ENCODE measurements at regions of chr11 and their contacts with region 1.

Region 1: DNA sequence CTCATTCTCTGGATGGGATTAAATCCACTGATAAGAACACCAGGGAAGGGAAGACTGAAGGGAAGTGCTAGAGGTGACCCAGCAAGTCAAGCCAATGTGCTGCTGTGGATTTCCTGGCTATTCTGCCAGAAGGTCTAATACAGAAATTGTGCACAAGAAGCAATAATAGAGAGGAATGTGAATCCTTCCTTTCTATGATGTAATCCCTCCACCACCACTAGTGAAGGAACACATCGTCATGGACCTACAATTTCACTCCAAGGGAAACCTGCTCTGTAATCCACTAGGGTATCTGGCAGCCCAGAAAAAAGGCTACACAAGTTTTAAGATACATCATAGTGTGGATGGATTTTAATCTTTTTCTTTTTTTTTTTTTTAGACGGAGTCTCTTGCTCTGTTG is 17.4 kb downstream of the LARGE2 start:
- DNase-seq: no peak
- ATAC-seq: no peak
- H3K4me3 Mint-ChIP-seq: no peak overlapping the region
- H3K27ac Mint-ChIP-seq: peak overlapping the region; percentile 88
- H3K4me1 Mint-ChIP-seq: peaks cover 60% of the 10 kb centered on the region
- H3K27me3 Mint-ChIP-seq: no peaks in the 10 kb centered on the region
- CTCF ChIP-seq: no peak

Region 2: DNA sequence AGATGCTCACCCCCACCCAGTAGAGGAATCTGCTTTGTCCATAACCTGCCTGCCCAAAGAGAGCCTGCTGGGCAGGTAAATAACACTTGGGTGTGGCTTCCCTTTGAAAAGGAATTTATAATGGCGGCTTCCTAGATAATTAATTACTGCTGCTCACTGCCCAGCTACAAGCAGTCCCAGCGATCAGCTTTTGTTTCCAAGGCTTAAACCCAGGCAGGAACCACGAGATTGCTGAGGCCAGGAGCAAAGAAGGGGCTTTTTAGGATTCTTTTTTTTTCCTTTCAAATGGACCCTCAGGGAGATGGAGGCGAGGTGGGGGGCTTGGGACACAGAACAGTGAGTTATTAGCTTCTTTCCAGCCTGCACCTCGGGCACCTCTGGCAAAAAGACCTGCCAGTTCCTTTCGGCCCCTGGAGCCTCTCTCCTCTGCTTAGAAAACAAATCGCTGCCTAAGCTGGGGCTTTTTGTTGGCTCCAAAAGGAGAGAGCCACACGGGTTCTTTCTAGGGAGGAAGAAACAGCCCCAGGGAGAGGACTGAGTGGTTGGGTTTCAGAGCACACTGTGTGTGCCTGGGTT is 1105.9 kb before region 1 on chr11:
- CTCF ChIA-PET with region 1: no interaction called
- POLR2A ChIA-PET with region 1: interaction called, 15 read pairs
- intact Hi-C with region 1: no loop called
- DNase-seq: no peak
- ATAC-seq: no peak
- H3K4me3 Mint-ChIP-seq: no peak overlapping the region
- H3K27ac Mint-ChIP-seq: no peak overlapping the region
- H3K4me1 Mint-ChIP-seq: no peaks in the 10 kb centered on the region
- H3K27me3 Mint-ChIP-seq: peaks cover 7% of the 10 kb centered on the region
- CTCF ChIP-seq: no peak